OCI-LY7 (cell line): ENCODE measurements at regions of chr17 and their contacts with region 1.

Region 1: DNA sequence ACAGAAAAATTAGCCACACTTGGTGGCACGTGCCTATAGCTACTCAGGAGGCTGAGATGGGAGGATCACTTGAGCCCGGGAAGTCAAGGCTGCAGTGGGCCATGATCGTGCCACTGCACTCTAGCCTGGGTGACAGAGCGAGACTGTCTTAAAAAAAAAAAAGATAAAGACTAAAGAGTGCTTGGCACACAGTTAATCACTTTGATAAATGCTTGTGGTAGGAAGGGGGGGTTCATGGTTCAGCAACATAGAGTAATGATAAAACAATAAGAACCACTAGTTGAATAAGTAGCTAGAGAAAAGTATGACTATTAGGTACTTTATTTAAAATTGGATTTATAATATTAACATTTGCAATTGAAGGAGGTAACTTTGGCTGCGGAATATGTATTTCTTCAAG is 43.3 kb downstream of the USP32 start:
- DNase-seq: no peak
- H3K4me3 ChIP-seq: no peak overlapping the region
- H3K27ac ChIP-seq: no peak overlapping the region
- H3K4me1 ChIP-seq: no peaks in the 10 kb centered on the region
- CTCF ChIP-seq: no peak

Region 2: DNA sequence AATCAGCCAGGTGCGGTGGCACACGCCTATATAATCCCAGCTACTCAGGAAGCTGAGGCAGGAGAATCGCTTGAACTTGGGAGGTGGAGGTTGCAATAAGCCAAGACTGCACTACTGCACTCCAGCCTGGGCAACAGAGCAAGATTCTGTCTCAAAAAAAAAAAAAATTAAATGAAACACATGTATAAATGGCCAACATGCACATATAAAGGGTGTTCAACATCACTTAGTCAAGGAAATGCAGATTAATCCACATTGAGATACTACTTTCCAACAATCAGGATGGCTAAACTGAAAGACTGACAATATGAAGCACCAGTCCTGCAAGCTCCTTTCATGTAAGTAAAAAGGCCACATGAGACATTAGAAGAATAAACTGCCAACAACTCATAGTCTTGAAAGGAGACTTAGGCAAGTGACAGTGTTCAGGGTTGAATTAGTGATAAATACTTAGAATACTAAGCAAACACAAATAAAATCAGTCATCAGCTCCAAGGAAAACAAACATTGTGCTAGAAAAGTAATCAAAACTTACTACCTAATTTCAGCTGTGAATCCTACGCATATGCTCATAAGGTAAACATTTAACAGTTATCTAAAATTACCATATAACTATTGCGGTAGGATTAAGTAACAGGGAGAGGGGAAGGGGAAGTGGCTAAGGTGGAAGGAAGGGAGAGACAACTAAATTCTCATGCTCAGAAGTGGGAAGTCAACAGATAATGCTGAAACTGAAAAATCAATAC is 23.0 kb after region 1 on chr17:
- CTCF ChIA-PET with region 1: no interaction called
- POLR2A ChIA-PET with region 1: interaction called, 11 read pairs
- intact Hi-C with region 1: no loop called
- DNase-seq: no peak
- H3K4me3 ChIP-seq: no peak overlapping the region
- H3K27ac ChIP-seq: no peak overlapping the region
- H3K4me1 ChIP-seq: no peaks in the 10 kb centered on the region
- CTCF ChIP-seq: no peak